Caco-2 (cell line): ENCODE measurements at regions of chr2 and their contacts with region 1.

Region 1: GRCh38 chr2:85595301-85596025 is at the start of gene RNF181:
- DNase-seq: peak; percentile 96 to 98
- H3K4me3 ChIP-seq: peak within 1 kb of the TSS; percentile 92
- H3K4me3 Mint-ChIP-seq: peak within 1 kb of the TSS; percentile 97
- H3K27ac Mint-ChIP-seq: peak within 1 kb of the TSS; percentile 83
- H3K4me1 ChIP-seq: peaks cover 17% of the 10 kb centered on the region
- H3K4me1 Mint-ChIP-seq: peaks cover 20% of the 10 kb centered on the region
- H3K27me3 ChIP-seq: no peaks in the 10 kb centered on the region
- H3K27me3 Mint-ChIP-seq: no peaks in the 10 kb centered on the region
- CTCF ChIP-seq: no peak
- total RNA-seq, gene RNF181: 113 and 123 TPM in 2 replicates

Region 2: GRCh38 chr2:85545780-85546240 is 49.7 kb before region 1 on chr2:
- CTCF ChIA-PET with region 1: no interaction called
- POLR2A ChIA-PET with region 1: no interaction called
- intact Hi-C with region 1: no loop called
- DNase-seq: no peak
- H3K4me3 ChIP-seq: no peak overlapping the region
- H3K4me3 Mint-ChIP-seq: no peak overlapping the region
- H3K27ac Mint-ChIP-seq: peak overlapping the region; percentile 37
- H3K4me1 ChIP-seq: no peaks in the 10 kb centered on the region; the same call in none of the 2 replicates
- H3K4me1 Mint-ChIP-seq: peaks cover 20% of the 10 kb centered on the region
- H3K27me3 ChIP-seq: no peaks in the 10 kb centered on the region
- H3K27me3 Mint-ChIP-seq: no peaks in the 10 kb centered on the region
- CTCF ChIP-seq: no peak

Region 3: DNA sequence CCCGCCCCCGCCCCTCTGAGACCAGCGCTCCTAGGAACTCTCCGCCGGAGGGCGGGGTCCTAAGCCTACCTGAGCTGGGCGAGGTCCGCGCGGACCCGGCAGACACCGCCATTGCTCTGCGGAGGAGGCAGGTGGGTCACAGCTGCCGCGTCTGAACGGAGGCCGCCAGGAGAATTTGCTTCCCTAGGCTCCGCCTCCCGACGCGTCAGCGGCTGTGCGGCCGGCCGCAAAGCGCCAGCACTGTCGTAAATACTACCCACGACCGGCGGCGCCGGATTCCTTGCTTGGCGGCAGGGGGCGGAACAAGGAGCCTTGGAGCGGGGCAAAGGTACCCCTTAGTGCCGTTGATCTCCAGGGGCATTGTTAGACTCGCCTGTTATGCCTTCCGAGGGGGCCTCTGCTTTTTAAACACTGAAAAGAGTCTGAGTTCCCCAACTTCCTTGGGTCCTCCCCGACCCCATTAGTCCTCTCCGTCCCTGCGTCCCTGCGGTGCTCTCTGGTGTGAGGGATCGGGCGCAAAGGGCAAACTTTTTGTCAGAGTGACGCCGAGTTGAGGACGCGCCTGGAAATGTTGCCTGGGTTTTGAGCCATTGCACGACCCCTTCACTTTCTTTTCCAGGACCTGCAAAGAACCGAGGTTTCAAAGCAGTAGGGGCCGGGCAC is 34.0 kb before region 1 on chr2 and contains the start of gene GGCX:
- CTCF ChIA-PET with region 1: interaction called, 7 read pairs
- POLR2A ChIA-PET with region 1: interaction called, 17 read pairs
- intact Hi-C with region 1: no loop called
- DNase-seq: peak; percentile 96 to 97
- H3K4me3 ChIP-seq: peak within 1 kb of the TSS; percentile 65
- H3K4me3 Mint-ChIP-seq: peak within 1 kb of the TSS; percentile 96
- H3K27ac Mint-ChIP-seq: peak within 1 kb of the TSS; percentile 98
- H3K4me1 ChIP-seq: peaks cover 34% of the 10 kb centered on the region
- H3K4me1 Mint-ChIP-seq: peaks cover 26% of the 10 kb centered on the region
- H3K27me3 ChIP-seq: no peaks in the 10 kb centered on the region
- H3K27me3 Mint-ChIP-seq: no peaks in the 10 kb centered on the region
- CTCF ChIP-seq: no peak
- total RNA-seq, gene GGCX: 85.1 and 96.8 TPM in 2 replicates

Region 4: GRCh38 chr2:85577386-85578242 is 17.8 kb before region 1 on chr2 and contains the start of gene VAMP8:
- CTCF ChIA-PET with region 1: no interaction called
- POLR2A ChIA-PET with region 1: interaction called, 22 read pairs
- intact Hi-C with region 1: no loop called
- DNase-seq: peak; percentile 87 to 89
- H3K4me3 ChIP-seq: peak within 1 kb of the TSS; percentile 67
- H3K4me3 Mint-ChIP-seq: peak within 1 kb of the TSS; percentile 90
- H3K27ac Mint-ChIP-seq: peak within 1 kb of the TSS; percentile 93
- H3K4me1 ChIP-seq: peaks cover 14% of the 10 kb centered on the region
- H3K4me1 Mint-ChIP-seq: peaks cover 17% of the 10 kb centered on the region
- H3K27me3 ChIP-seq: no peaks in the 10 kb centered on the region
- H3K27me3 Mint-ChIP-seq: no peaks in the 10 kb centered on the region
- CTCF ChIP-seq: no peak
- total RNA-seq, gene VAMP8: 82.9 and 85.5 TPM in 2 replicates

Region 5: DNA sequence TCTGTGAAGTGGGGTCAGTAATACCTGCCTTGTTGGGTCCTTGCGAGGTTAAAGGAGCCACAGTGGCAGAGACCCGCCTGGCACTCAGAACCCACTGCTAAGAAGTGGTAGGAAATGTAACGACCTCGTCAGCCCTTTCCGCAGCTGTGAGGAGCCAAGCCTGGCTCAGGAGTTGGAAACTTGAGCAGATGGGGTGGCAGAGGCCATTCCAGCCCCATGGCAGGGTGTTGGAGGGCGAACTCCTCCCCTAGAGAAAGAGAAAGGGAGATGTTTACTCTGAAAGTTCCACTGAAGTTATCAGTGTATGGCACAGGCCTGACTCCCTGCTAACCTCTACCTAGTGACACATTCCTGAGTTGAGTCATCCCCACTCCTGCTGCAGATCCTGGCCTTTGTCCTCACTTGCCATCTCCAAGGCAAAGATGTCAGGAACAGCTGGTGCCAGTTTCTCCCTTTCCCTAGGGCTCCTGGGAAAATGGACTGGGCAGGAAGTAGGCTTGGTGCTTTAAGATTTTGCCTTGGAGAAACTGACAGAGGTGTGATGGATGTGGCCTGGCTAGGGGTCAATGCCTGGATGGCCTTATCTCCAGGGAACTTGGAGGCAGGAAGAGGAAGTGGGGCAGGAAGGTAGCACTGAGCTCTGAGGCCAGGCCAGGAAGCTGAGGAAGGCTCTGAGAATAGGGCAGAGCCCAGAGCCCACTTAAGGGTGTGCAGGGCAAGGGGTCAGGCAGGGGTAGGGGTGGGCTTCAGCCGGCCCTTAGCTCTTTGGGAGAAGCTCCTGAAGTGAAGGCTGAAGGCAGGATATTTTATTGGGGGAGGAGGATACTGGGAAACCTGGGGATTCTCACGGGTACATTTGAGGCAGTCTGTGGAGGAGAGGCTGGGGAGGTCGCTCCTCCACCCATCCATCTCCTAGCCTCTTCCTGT is 10.3 kb before region 1 on chr2:
- CTCF ChIA-PET with region 1: interaction called, 9 read pairs
- POLR2A ChIA-PET with region 1: interaction called, 13 read pairs
- intact Hi-C with region 1: loop called (anchors 1 kb)
- DNase-seq: peak; percentile 79 to 90
- H3K4me3 ChIP-seq: peak overlapping the region; percentile 47
- H3K4me3 Mint-ChIP-seq: peak overlapping the region; percentile 76
- H3K27ac Mint-ChIP-seq: peak overlapping the region; percentile 83
- H3K4me1 ChIP-seq: peaks cover 27% of the 10 kb centered on the region
- H3K4me1 Mint-ChIP-seq: peaks cover 34% of the 10 kb centered on the region
- H3K27me3 ChIP-seq: no peaks in the 10 kb centered on the region
- H3K27me3 Mint-ChIP-seq: peaks cover 10% of the 10 kb centered on the region
- CTCF ChIP-seq: no peak

Region 6: GRCh38 chr2:85611705-85612587 is 16.5 kb after region 1 on chr2 and contains the start of gene C2orf68:
- CTCF ChIA-PET with region 1: interaction called, 3 read pairs
- POLR2A ChIA-PET with region 1: interaction called, 15 read pairs
- intact Hi-C with region 1: no loop called
- DNase-seq: peak; percentile 94 to 95
- H3K4me3 ChIP-seq: peak within 1 kb of the TSS; percentile 74
- H3K4me3 Mint-ChIP-seq: peak within 1 kb of the TSS; percentile 90
- H3K27ac Mint-ChIP-seq: peak within 1 kb of the TSS; percentile 86
- H3K4me1 ChIP-seq: no peaks in the 10 kb centered on the region
- H3K4me1 Mint-ChIP-seq: no peaks in the 10 kb centered on the region
- H3K27me3 ChIP-seq: no peaks in the 10 kb centered on the region
- H3K27me3 Mint-ChIP-seq: no peaks in the 10 kb centered on the region
- CTCF ChIP-seq: no peak
- total RNA-seq, gene C2orf68: 49.0 and 54.5 TPM in 2 replicates

Region 7: DNA sequence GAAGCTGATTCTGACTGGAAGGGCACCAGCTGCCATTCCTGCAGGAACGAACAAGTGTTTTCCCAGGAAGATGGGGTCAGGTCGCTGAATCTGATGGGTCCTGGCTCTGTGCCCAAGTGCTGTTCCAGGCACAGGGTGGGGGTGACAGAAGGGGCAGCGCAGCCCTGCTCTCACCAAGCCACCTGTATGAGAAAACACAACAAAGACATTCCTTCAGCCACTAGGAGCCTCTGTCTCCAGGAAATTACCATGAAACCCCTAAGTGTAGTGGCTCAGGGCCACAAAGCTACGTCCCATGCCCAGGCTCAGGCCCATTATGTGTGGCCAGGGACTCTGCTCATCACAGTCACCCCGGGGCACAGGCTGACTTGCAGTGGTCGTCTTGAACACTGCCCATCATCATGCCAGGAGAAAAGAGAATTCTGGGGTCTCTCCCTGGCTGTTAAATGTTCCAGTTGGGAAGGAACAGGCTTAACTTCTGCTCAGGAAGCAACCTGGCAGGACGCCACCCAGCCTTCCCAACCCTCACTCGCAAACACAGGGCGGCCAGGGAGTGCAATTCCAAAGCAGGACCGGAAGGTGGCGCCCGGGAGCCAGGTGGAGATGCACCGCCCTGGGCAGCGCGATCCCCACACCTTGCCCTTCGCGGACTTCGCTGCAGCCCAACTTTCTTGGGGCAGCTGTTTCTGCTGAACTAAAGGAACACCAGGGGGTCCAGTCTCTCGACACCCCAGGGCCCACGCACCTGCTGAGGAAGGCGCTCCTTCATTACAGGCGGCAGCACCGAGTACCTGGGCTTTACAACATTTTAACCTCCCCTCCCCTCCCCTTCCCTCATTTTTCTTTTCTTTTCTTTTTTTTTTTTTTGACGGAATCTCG is 83.6 kb after region 1 on chr2:
- CTCF ChIA-PET with region 1: no interaction called
- POLR2A ChIA-PET with region 1: no interaction called
- intact Hi-C with region 1: no loop called
- DNase-seq: peak; percentile 73 to 89
- H3K4me3 ChIP-seq: 0 out of 2 replicates have a peak overlapping the region, but pooled peaks have one; percentile 21
- H3K4me3 Mint-ChIP-seq: no peak overlapping the region
- H3K27ac Mint-ChIP-seq: no peak overlapping the region
- H3K4me1 ChIP-seq: peaks cover 5% of the 10 kb centered on the region; the same call in 1 of the 2 replicates
- H3K4me1 Mint-ChIP-seq: no peaks in the 10 kb centered on the region
- H3K27me3 ChIP-seq: no peaks in the 10 kb centered on the region
- H3K27me3 Mint-ChIP-seq: peaks cover 2% of the 10 kb centered on the region
- CTCF ChIP-seq: peak; percentile 96 to 98